ENCODE measurements at regions of chr5 and their contacts with region 1.

Region 1: GRCh38 chr5:177113566-177114424 is 19.8 kb upstream of the NSD1 start:
- DNase-seq: no peak
- H3K4me3 ChIP-seq: no peak overlapping the region
- CTCF ChIP-seq: peak; percentile 97

Region 2: DNA sequence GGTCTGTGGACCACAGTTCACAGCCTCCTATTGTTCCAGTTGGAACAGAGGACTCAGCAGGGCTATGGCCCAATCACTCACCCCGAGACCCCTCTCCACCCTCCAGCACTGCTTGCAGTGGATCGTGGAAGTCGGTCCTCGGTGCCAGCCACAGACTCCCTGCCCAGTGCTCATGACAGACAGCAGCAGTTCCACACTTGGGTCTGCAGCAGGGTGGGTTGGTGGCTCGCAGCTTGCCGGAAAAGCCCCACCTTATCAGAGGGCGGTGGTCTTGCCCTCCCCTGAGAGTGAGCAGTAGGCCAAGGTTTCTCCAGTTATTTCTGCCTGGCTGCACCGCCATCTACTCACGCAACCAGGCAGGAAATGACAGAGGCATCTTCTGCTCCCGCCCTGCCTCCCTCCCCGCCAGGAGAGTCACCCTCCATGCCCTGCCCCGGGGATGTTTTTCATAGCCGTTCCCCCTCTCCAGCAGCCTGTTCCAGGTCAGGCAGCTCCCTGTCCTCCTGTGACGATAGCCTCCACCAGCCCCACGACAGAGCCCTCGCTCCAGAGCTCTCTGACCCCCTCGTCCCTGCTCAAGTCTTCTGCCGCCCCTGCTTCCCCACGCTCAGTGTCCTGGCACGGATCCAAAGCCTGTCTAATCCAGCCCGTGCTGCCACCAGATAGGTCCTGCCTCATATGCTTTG is 268.9 kb before region 1 on chr5:
- CTCF ChIA-PET with region 1: no interaction called
- POLR2A ChIA-PET with region 1: no interaction called
- DNase-seq: no peak
- H3K4me3 ChIP-seq: no peak overlapping the region
- CTCF ChIP-seq: no peak

Region 3: GRCh38 chr5:177071666-177072385 is 42.0 kb before region 1 on chr5:
- CTCF ChIA-PET with region 1: interaction called, 158 read pairs
- POLR2A ChIA-PET with region 1: no interaction called
- DNase-seq: peak; percentile 42
- H3K4me3 ChIP-seq: peak overlapping the region; percentile 30; the same call in 1 of the 2 replicates
- CTCF ChIP-seq: peak; percentile 72

Region 4: DNA sequence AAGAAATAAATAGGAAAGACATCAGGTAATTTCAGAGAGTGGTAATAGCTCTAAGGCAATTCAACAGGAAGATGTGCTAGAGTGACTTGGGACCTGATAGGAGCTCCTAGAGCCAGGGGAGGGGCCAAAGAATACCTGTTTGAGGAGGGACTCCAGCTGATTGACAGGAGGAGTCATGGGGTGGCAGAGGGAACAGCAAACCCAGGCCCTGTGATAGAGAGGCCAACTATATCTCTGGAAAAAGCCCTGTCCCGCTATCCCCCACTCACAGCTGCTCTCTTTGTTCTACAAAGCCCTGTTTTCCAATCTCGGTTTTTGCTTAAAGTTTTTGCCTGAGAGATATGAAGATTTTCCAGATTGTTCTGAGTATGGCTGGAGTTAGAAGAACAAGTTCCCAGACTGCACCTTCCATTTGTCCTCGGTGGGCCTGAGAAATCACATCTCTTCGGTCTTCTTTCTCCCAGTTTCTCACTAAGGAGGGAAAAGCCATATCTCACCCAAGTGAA is 10.7 kb after region 1 on chr5:
- CTCF ChIA-PET with region 1: interaction called, 55 read pairs
- POLR2A ChIA-PET with region 1: no interaction called
- DNase-seq: no peak
- H3K4me3 ChIP-seq: no peak overlapping the region
- CTCF ChIP-seq: no peak

Region 5: DNA sequence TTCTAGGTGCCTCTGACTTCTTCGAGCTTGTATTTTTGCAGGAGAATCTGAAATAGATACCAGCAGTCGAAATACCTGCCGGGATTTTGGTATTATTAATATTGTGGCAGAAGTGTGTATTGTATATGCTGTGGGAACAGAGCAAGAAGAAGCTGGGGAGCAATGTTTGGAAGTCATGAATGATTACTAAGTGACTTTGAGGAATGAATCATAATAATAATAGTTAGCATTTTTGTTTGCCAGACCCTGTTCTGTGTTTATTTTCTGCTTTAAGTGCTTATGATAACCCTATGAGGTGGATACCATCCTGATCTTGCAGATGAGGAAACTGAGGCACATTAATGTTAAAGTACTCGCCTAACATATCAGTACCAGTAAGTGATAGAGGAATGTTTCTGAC is 157.3 kb after region 1 on chr5:
- CTCF ChIA-PET with region 1: interaction called, 31 read pairs
- POLR2A ChIA-PET with region 1: no interaction called
- DNase-seq: no peak
- H3K4me3 ChIP-seq: no peak overlapping the region
- CTCF ChIP-seq: no peak

Region 6: DNA sequence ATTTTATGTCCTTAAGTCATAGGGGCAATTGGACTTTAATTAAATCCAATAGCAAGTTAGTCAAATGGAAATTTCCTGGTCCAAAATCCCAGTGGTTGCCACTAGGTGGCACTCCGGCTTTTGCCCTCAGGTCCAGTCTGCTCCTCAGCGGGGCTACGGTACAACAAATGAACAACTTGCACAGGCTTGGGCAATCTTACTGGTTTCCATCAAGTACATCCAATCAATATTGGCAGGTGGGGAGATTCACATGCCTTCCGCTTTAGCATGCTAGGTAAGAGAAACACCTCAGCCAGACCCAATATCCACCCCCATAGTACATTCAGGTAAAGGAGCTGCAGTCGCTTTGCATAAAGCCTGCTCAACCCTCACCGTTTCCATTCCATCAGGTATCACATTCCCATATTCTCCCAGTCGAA is 204.2 kb after region 1 on chr5:
- CTCF ChIA-PET with region 1: interaction called, 147 read pairs
- POLR2A ChIA-PET with region 1: no interaction called
- DNase-seq: peak; percentile 38
- H3K4me3 ChIP-seq: no peak overlapping the region
- CTCF ChIP-seq: peak; percentile 78

Region 7: GRCh38 chr5:177403792-177404640 is 290.2 kb after region 1 on chr5:
- CTCF ChIA-PET with region 1: interaction called, 29 read pairs
- POLR2A ChIA-PET with region 1: no interaction called
- DNase-seq: no peak
- H3K4me3 ChIP-seq: peak overlapping the region; percentile 71
- CTCF ChIP-seq: peak; percentile 91